ENCODE measurements at regions of chr17 and their contacts with region 1.

Region 1: DNA sequence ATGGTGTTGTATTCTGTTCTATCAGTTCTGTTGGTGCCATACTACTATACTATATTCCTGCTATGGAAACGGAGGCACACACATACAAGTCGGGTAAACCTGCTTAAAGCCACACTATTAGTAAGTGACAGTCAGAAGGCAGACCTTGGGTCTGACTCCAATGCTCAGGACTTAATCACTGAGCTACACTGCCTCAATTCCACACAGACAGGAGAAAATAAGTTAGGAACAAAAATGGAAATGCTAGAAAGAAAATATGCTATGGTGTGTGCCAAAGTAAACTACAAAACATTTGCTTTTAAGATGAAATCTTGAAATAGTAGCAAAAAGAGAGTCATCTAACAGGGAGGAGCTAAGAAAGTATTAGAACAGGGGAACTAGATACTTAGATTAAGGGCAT is 48.1 kb downstream of the MYO1D start:
- DNase-seq: no peak
- H3K4me3 ChIP-seq: peak overlapping the region in 1 of 2 donors; percentile 20
- H3K27ac ChIP-seq: peak overlapping the region; percentile 71 to 74
- H3K4me1 ChIP-seq: peaks cover 0 to 88% (median 28%) of the 10 kb centered on the region in 4 donors
- H3K27me3 ChIP-seq: no peaks in the 10 kb centered on the region
- CTCF ChIP-seq: no peak

Region 2: GRCh38 chr17:32870027-32870670 is 41.3 kb after region 1 on chr17:
- intact Hi-C with region 1: loop called (anchors 5 kb)
- DNase-seq: peak; percentile 51 to 78
- H3K4me3 ChIP-seq: no peak overlapping the region
- H3K27ac ChIP-seq: peak overlapping the region; percentile 61 to 79
- H3K4me1 ChIP-seq: peaks cover 7 to 98% (median 63%) of the 10 kb centered on the region in 4 donors
- H3K27me3 ChIP-seq: no peaks in the 10 kb centered on the region
- CTCF ChIP-seq: no peak

Measured in tibial artery (tissue), 4 donors.